ENCODE measurements at regions of chr11 and their contacts with region 1.

Region 1: DNA sequence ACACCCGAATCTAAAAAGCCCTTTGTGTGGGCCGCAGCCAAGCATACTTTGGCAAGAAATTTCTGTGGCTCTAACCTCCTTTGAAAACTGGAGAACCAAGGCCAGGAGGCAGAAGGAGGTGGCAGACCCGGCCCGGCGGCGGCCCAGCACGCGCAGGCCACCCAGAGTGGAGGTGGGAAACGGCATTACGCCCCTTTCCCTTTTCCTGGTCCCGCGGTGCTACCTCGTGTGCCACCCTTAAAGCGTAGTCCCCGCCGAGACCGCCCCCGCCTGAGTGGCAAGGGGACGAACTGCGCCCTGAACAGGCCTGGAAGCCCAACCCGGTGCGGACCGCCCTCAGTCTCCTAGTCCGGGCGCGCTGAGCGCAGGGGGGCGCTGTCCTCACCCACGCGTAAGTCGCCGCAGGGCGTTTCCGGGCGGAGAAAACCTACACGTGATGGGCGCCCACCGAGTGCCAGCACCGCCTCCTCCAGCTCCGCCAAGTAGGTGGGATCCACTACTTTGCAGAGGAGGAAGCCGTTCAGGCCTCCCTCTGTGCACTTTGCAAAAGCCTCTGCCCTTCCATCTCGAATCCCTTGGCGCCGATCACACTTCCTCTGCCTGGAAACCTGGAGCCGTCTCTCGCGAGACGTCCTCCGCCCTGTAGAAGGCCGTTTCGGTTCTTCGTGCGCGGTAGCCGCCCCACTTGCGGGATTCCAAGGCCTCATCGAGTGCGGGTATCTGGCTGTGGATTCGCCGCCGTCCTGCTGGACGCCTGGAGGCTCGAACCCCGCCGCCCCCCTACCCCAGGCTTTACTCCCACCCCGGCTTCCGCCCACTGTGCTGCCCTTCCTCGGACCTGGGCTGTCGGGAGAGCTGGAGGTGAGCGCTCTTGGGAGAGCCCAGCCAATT is at the start of gene ACCS:
- DNase-seq: peak; percentile 93
- H3K4me3 Mint-ChIP-seq: peak within 1 kb of the TSS; percentile 79
- H3K27ac Mint-ChIP-seq: peak within 1 kb of the TSS; percentile 86
- H3K4me1 Mint-ChIP-seq: peaks cover 24% of the 10 kb centered on the region
- H3K27me3 Mint-ChIP-seq: no peaks in the 10 kb centered on the region
- total RNA-seq, gene ACCS: 13.7 to 17.5 TPM

Region 2: DNA sequence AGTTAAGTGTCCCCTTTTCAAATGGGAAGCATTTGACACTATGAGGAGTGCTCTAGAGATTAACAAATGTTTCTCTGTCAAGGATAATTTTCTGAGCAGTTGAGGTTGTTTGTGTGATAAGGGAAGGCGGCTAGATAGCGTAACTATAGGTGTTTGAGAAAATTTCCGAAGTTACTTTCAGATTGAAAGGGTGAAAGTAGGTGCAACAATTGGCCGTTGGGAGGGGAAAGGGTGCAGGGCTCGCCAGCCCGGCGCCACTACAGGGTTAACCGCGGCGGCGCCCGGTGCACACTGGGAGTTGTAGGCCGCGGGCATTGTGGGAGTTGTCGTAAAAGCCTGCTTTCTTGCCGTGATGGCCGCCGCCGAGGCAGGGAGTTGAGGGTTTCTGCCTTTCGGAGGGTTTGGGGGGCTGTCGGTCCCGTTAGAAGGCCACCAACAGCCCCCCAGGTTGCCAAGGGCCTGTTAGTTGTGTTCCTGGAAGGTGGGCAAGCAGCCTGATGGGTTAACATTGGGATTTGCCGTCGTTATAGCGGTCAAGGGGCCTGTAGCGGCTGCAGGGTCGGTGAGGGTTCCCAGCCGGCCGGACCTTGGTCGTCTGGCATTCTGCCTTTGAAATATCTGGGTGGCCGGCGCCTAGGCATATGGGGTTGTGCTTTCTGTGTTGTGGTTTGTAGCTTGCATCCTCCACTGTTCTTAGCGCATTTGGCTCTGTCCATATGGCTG is 422.0 kb before region 1 on chr11:
- CTCF ChIA-PET with region 1: no interaction called
- POLR2A ChIA-PET with region 1: no interaction called
- intact Hi-C with region 1: loop called (anchors 10 kb)
- DNase-seq: peak; percentile 93
- H3K4me3 Mint-ChIP-seq: peak overlapping the region; percentile 97
- H3K27ac Mint-ChIP-seq: peak overlapping the region; percentile 75
- H3K4me1 Mint-ChIP-seq: peaks cover 24% of the 10 kb centered on the region
- H3K27me3 Mint-ChIP-seq: peaks cover 11% of the 10 kb centered on the region

Region 3: DNA sequence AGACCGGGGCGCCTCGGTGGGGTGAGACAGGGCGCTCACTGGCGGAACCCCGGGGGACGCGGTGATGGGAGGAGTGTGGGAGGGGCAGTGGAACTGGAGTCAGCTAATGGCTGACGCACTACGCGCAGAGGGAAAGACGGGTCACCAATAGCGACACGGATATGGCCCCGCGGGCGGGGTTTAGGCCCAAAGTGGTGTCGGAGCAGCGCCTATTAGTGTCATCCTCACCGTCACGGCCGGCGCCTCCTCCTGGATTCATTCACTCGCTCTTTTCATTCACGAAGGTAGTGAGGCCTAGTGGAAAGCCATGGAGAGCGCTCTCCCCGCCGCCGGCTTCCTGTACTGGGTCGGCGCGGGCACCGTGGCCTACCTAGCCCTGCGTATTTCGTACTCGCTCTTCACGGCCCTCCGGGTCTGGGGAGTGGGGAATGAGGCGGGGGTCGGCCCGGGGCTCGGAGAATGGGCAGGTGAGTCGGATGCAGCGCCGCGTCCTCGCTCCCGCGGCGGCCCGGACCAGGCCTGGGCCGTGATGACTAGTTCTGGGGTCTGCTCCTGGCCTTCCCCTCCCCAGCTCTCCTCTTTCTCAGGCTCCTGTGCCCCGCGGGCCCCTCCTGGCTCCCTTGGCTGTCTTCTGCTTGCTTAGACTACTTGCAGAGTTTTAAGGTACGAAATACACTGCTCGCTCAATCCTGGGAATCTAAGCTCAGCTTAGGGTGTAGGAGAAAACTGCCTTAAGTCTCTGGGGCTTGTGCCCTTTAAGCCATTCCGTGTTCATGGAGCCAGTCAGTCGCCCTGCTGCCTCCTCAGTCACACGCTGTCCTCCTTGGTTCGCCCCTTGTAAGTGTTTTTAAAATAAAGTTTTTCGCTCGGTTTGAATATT is 385.3 kb before region 1 on chr11 and contains the start of gene HSD17B12:
- CTCF ChIA-PET with region 1: no interaction called
- POLR2A ChIA-PET with region 1: no interaction called
- intact Hi-C with region 1: loop called (anchors 1 kb)
- DNase-seq: peak; percentile 100
- H3K4me3 Mint-ChIP-seq: peak within 1 kb of the TSS; percentile 92
- H3K27ac Mint-ChIP-seq: peak within 1 kb of the TSS; percentile 94
- H3K4me1 Mint-ChIP-seq: peaks cover 33% of the 10 kb centered on the region
- H3K27me3 Mint-ChIP-seq: no peaks in the 10 kb centered on the region
- total RNA-seq, gene HSD17B12: 32.8 to 35.3 TPM

Region 4: DNA sequence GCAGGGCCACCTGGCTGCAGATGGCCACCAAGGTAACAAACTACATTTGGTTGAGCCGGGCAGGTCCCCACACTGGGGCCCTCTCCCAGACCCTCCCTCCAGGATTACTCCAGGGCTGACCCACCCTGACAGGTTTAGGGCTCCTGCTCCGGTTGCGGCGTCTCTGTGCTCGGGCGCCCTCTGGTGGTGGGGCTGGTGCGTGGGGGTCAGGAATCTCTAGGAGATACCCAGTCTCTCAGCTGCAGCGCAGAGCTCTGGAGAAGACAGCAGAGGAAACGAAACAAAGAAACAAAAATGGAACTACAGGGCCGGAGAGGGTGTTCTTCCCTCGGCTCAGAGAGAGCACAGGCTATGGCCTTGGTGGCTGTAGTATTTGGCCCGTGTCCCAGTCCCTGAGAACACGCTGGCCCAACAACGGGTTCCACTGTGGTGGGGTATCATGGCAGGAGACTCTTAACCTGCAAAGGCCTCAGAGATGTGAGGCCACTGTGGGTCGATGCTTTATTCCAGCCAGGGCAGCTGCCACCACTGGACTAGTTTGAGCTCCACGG is 121.2 kb before region 1 on chr11:
- CTCF ChIA-PET with region 1: no interaction called
- POLR2A ChIA-PET with region 1: no interaction called
- intact Hi-C with region 1: loop called (anchors 10 kb)
- DNase-seq: peak; percentile 82
- H3K4me3 Mint-ChIP-seq: peak overlapping the region; percentile 41
- H3K27ac Mint-ChIP-seq: no peak overlapping the region
- H3K4me1 Mint-ChIP-seq: peaks cover 17% of the 10 kb centered on the region
- H3K27me3 Mint-ChIP-seq: peaks cover 60% of the 10 kb centered on the region

Region 5: GRCh38 chr11:44110231-44110679 is 44.2 kb after region 1 on chr11:
- CTCF ChIA-PET with region 1: no interaction called
- POLR2A ChIA-PET with region 1: no interaction called
- intact Hi-C with region 1: loop called (anchors 5 kb)
- DNase-seq: peak; percentile 70
- H3K4me3 Mint-ChIP-seq: no peak overlapping the region
- H3K27ac Mint-ChIP-seq: no peak overlapping the region
- H3K4me1 Mint-ChIP-seq: peaks cover 8% of the 10 kb centered on the region
- H3K27me3 Mint-ChIP-seq: no peaks in the 10 kb centered on the region